ENCODE measurements at regions of chr12 and their contacts with region 1.

Region 1: DNA sequence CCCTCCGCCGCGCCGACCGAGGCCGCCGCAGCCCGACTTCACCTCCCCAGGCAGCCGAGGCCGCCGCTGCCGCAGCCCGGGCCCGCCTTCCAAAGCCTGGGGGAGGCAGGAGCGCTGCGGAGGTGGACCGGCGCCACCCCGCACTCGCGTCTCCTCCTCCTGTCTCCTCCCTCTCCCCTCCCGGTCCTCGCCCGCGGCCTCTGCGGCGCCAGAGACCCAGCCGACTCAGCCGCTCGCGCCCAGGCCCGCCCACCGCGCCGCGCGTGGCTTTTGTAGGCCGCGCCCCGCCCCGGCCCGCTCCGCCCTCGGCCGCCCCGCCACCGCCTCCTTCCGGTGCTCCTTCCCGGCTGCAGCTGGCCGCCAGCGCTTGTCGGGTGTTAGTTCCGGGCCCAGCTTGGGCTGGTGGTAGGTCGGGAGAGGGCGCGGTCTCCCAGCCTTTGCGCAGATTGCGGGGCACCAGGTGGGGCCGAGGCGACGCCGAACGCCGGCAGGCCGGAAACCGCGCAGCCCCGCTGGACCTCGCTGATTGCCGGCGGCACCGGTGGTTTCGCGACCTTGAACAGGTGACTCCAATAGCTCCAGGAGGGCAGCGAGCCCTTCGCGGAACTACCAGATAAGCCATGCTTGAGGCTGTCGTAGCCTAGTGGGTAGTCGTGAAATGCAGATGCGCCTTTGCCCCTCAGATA is at the start of gene CAPRIN2:
- DNase-seq: peak; percentile 90
- ATAC-seq: peak; percentile 93
- H3K4me3 ChIP-seq: peak within 1 kb of the TSS; percentile 78 to 95 (median 85)
- H3K27ac ChIP-seq: peak within 1 kb of the TSS; percentile 71
- H3K4me1 ChIP-seq: peaks cover 50% of the 10 kb centered on the region
- H3K27me3 ChIP-seq: no peaks in the 10 kb centered on the region; a peak in 1 of 5 replicates
- CTCF ChIP-seq: peak; percentile 87
- EP300 ChIP-seq: peak in 1 of 2 experiments; percentile 2; a peak in 1 of 4 replicates
- POLR2A ChIP-seq: peak; percentile 67 to 75; a peak in 3 of 4 replicates
- RAD21 ChIP-seq: peak; percentile 65
- total RNA-seq, gene CAPRIN2: 12.0 and 21.7 TPM in 2 replicates

Region 2: GRCh38 chr12:30695199-30696103 is 59.4 kb before region 1 on chr12 and contains the start of gene IPO8:
- CTCF ChIA-PET with region 1: no interaction called
- POLR2A ChIA-PET with region 1: interaction called, 15 read pairs
- in situ Hi-C with region 1: no loop called
- intact Hi-C with region 1: loop called (anchors 1 kb)
- DNase-seq: peak; percentile 93
- ATAC-seq: peak; percentile 89
- H3K4me3 ChIP-seq: peak within 1 kb of the TSS; percentile 93 to 99 (median 96)
- H3K27ac ChIP-seq: peak within 1 kb of the TSS; percentile 84
- H3K4me1 ChIP-seq: peaks cover 49% of the 10 kb centered on the region
- H3K27me3 ChIP-seq: no peaks in the 10 kb centered on the region; a peak in 1 of 5 replicates
- CTCF ChIP-seq: peak; percentile 1; the same call in 1 of the 2 replicates
- EP300 ChIP-seq: no peak
- POLR2A ChIP-seq: peak; percentile 48 to 49; a peak in 3 of 4 replicates
- RAD21 ChIP-seq: no peak
- total RNA-seq, gene IPO8: 21.8 and 40.0 TPM in 2 replicates

Region 3: DNA sequence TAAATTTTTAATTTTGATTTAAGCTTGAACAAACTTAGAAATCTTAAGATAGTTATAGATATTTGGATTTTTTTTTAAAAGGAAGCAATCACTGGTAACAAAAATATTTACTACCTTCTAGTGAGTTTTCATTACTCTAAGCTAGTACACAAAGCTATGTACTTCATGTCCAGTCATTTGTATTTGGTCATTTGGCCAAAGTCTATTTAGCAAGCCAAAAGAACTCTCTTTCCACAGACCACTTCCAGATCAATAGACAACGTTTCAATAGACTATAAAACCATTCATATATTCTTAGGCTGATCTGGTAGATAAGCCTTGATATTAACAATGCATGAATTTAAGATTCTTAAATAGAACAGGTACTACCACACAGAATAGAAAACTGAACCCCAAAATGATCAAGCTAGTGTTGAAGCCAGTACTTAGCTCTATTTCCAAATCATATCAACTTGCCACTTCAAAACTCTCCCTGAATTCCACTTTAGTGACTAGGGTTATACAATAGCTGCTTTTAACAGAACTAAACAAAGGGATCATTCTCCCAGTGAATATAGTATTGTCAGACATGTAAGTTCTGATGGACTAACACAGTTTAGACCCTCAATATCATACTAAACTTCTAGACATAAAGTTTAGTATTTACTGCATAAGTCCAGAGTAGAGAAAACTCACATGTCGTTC is 21.8 kb before region 1 on chr12:
- CTCF ChIA-PET with region 1: no interaction called
- POLR2A ChIA-PET with region 1: interaction called, 3 read pairs
- in situ Hi-C with region 1: no loop called
- intact Hi-C with region 1: loop called (anchors 2 kb)
- DNase-seq: peak; percentile 48
- ATAC-seq: peak; percentile 76
- H3K4me3 ChIP-seq: no peak overlapping the region
- H3K27ac ChIP-seq: peak overlapping the region; percentile 44
- H3K4me1 ChIP-seq: peaks cover 57% of the 10 kb centered on the region
- H3K27me3 ChIP-seq: no peaks in the 10 kb centered on the region
- CTCF ChIP-seq: no peak
- EP300 ChIP-seq: 0 out of 4 replicates have a peak, but pooled peaks of 1 of the 2 experiments have one; percentile 14
- POLR2A ChIP-seq: no peak
- RAD21 ChIP-seq: no peak

Region 4: GRCh38 chr12:30795410-30796312 is 40.8 kb after region 1 on chr12:
- CTCF ChIA-PET with region 1: interaction called, 3 read pairs
- POLR2A ChIA-PET with region 1: interaction called, 19 read pairs
- in situ Hi-C with region 1: no loop called
- intact Hi-C with region 1: loop called (anchors 2 kb)
- DNase-seq: peak; percentile 48
- ATAC-seq: peak; percentile 92
- H3K4me3 ChIP-seq: peak overlapping the region; percentile 62 to 77 (median 64)
- H3K27ac ChIP-seq: no peak overlapping the region
- H3K4me1 ChIP-seq: peaks cover 42% of the 10 kb centered on the region
- H3K27me3 ChIP-seq: no peaks in the 10 kb centered on the region
- CTCF ChIP-seq: peak; percentile 12; the same call in 1 of the 2 replicates
- EP300 ChIP-seq: no peak
- POLR2A ChIP-seq: no peak
- RAD21 ChIP-seq: no peak

Region 5: DNA sequence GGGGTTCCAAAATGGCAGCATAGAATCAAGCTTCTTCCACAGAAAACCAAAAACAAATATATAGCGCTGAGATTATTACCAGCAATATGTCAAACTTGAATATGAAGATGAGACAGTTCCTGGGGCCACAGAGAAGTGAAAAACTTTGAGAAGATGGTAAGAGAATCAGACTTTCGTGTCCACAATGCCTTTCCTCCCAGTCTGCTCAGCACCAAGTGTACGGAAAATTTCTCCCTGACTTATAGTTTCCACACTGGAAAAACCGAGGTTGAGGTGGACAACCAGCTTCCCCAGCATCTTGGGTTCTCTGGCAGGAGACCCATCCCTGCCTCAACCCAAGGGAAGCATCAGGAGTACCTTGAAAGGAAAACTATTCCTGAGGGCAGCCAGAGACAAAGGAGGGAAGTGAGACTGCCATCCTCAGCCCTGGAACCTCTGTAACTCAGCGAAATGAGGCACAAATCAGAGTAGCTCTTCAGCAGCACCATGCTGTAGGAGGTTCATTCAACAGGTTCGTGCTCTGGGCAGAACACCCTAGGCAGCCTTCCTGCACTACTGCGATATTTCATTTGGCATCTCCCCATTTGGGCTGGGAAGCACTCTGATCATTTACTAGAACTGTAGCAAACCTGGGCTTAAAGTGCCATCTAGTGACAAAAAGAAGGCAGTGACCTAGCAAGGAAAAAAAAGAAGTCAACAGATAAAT is 52.3 kb after region 1 on chr12:
- CTCF ChIA-PET with region 1: interaction called, 3 read pairs
- POLR2A ChIA-PET with region 1: no interaction called
- in situ Hi-C with region 1: loop called (anchors 5 kb)
- intact Hi-C with region 1: loop called (anchors 2 kb)
- DNase-seq: peak; percentile 54
- ATAC-seq: peak; percentile 96
- H3K4me3 ChIP-seq: no peak overlapping the region
- H3K27ac ChIP-seq: no peak overlapping the region
- H3K4me1 ChIP-seq: peaks cover 14% of the 10 kb centered on the region
- H3K27me3 ChIP-seq: no peaks in the 10 kb centered on the region
- CTCF ChIP-seq: peak; percentile 88
- EP300 ChIP-seq: no peak
- POLR2A ChIP-seq: no peak
- RAD21 ChIP-seq: peak; percentile 83